ENCODE measurements at regions of chr6 and their contacts with region 1.

Region 1: GRCh38 chr6:3068329-3069214 is at the start of gene RIPK1:
- DNase-seq: peak; percentile 98
- ATAC-seq: peak; percentile 74
- H3K4me3 Mint-ChIP-seq: peak within 1 kb of the TSS; percentile 93
- H3K27ac Mint-ChIP-seq: peak within 1 kb of the TSS; percentile 94
- H3K4me1 Mint-ChIP-seq: peaks cover 38% of the 10 kb centered on the region
- H3K27me3 Mint-ChIP-seq: no peaks in the 10 kb centered on the region
- CTCF ChIP-seq: no peak
- total RNA-seq, gene RIPK1: 20.5 and 21.8 TPM in 2 replicates

Region 2: GRCh38 chr6:2765166-2765895 is 303.2 kb before region 1 on chr6 and contains the start of gene WRNIP1:
- CTCF ChIA-PET with region 1: no interaction called
- POLR2A ChIA-PET with region 1: interaction called, 3 read pairs
- intact Hi-C with region 1: loop called (anchors 1 kb)
- DNase-seq: peak; percentile 92
- ATAC-seq: peak; percentile 89
- H3K4me3 Mint-ChIP-seq: peak within 1 kb of the TSS; percentile 93
- H3K27ac Mint-ChIP-seq: peak within 1 kb of the TSS; percentile 99
- H3K4me1 Mint-ChIP-seq: peaks cover 39% of the 10 kb centered on the region
- H3K27me3 Mint-ChIP-seq: no peaks in the 10 kb centered on the region
- CTCF ChIP-seq: no peak
- total RNA-seq, gene WRNIP1: 31.6 and 31.9 TPM in 2 replicates

Region 3: GRCh38 chr6:2817778-2818443 is 250.7 kb before region 1 on chr6:
- CTCF ChIA-PET with region 1: no interaction called
- POLR2A ChIA-PET with region 1: no interaction called
- intact Hi-C with region 1: no loop called
- DNase-seq: no peak
- ATAC-seq: no peak
- H3K4me3 Mint-ChIP-seq: no peak overlapping the region
- H3K27ac Mint-ChIP-seq: no peak overlapping the region
- H3K4me1 Mint-ChIP-seq: no peaks in the 10 kb centered on the region
- H3K27me3 Mint-ChIP-seq: no peaks in the 10 kb centered on the region
- CTCF ChIP-seq: no peak

Region 4: DNA sequence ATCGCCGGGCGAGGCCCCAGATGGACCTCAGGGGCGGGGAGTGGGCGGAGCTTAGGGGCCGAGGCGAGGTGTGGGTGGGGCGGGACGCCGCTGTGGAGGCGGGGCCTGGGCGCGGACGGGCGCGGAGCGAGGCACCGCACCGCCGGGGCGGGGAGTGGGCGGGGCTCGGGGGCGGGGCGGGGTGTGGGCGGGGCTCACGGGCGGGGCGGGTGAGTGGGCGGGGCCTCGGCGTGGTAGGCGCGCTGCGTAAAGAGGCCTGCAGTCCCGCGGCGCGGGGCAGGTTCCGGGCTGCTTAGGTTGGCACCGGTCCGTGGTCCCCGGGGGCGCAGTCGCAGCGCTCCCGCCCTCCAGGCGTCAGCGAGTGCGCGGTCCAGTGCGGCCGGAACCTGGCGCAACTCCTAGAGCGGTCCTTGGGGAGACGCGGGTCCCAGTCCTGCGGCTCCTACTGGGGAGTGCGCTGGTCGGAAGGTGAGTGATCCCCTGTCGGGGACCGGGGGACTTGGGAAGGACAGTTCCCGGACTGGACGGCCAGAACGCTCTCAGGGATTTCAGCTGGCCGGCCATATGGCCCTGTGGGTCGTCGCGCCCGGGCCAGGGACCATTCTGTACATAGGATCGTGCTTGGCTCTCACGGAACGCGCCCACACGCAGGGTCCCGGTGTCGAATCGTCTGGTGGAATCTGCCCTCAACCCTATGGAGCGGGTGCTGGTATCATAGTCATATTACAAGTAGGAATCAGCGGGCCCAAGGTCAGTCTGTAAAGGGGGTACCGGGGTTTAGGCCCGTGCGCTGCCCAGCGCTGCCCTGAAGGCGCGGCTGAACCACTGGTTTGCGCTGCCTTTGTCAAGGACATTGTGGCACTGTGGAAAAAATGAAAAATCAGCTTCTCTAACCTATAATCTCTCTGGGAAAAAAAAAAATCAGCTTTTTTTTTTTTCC is 68.7 kb before region 1 on chr6 and contains the start of gene NQO2:
- CTCF ChIA-PET with region 1: interaction called, 6 read pairs
- POLR2A ChIA-PET with region 1: interaction called, 18 read pairs
- intact Hi-C with region 1: loop called (anchors 2 kb)
- DNase-seq: peak; percentile 91
- ATAC-seq: peak; percentile 88
- H3K4me3 Mint-ChIP-seq: peak within 1 kb of the TSS; percentile 90
- H3K27ac Mint-ChIP-seq: peak within 1 kb of the TSS; percentile 80
- H3K4me1 Mint-ChIP-seq: peaks cover 16% of the 10 kb centered on the region
- H3K27me3 Mint-ChIP-seq: no peaks in the 10 kb centered on the region
- CTCF ChIP-seq: no peak
- total RNA-seq, gene NQO2: 11.9 and 12.3 TPM in 2 replicates

Region 5: DNA sequence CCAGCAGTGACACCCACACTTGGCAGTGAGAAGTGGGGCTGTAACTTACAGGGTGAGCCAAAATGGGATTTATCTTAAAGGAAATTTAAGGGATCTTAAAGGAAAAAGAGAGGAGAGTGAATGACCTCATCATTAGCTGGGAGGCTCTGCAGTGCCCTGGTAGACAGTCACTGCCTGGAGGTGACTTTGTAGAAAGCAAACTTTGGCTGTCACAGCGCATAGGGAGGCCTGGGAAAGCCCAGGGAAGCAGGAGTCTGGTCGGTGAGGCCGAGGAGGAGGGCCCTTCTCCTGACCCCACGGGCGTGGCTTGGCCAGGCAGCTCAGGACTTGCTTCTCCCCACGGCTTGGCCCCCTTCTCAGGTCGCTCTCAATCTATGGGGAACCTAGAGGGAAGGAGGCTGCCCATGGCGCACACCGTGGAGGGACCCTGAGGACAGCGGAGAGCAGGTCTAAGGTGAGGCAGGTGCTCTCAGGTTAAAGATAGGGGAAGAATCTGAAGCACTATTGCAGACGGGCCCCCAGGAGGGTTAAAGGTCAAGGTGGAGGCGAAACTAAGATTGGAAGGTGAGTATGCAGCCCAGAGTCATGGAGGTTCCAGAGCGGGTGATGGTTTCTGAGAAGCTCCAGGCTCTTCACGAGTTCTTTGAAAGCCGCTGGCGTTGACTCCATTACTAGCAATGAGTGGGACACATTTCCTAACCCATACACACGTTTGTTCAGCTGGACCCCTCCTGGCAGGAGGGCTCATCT is 15.9 kb before region 1 on chr6:
- CTCF ChIA-PET with region 1: interaction called, 5 read pairs
- POLR2A ChIA-PET with region 1: interaction called, 12 read pairs
- intact Hi-C with region 1: no loop called
- DNase-seq: no peak
- ATAC-seq: no peak
- H3K4me3 Mint-ChIP-seq: peak overlapping the region; percentile 76
- H3K27ac Mint-ChIP-seq: no peak overlapping the region
- H3K4me1 Mint-ChIP-seq: peaks cover 14% of the 10 kb centered on the region
- H3K27me3 Mint-ChIP-seq: peaks cover 9% of the 10 kb centered on the region
- CTCF ChIP-seq: no peak

Region 6: GRCh38 chr6:3162565-3163247 is 94.1 kb after region 1 on chr6:
- CTCF ChIA-PET with region 1: no interaction called
- POLR2A ChIA-PET with region 1: interaction called, 3 read pairs
- intact Hi-C with region 1: loop called (anchors 2 kb)
- DNase-seq: peak; percentile 70
- ATAC-seq: peak; percentile 82
- H3K4me3 Mint-ChIP-seq: peak overlapping the region; percentile 87
- H3K27ac Mint-ChIP-seq: peak overlapping the region; percentile 69
- H3K4me1 Mint-ChIP-seq: peaks cover 28% of the 10 kb centered on the region
- H3K27me3 Mint-ChIP-seq: peaks cover 2% of the 10 kb centered on the region
- CTCF ChIP-seq: no peak

Region 7: DNA sequence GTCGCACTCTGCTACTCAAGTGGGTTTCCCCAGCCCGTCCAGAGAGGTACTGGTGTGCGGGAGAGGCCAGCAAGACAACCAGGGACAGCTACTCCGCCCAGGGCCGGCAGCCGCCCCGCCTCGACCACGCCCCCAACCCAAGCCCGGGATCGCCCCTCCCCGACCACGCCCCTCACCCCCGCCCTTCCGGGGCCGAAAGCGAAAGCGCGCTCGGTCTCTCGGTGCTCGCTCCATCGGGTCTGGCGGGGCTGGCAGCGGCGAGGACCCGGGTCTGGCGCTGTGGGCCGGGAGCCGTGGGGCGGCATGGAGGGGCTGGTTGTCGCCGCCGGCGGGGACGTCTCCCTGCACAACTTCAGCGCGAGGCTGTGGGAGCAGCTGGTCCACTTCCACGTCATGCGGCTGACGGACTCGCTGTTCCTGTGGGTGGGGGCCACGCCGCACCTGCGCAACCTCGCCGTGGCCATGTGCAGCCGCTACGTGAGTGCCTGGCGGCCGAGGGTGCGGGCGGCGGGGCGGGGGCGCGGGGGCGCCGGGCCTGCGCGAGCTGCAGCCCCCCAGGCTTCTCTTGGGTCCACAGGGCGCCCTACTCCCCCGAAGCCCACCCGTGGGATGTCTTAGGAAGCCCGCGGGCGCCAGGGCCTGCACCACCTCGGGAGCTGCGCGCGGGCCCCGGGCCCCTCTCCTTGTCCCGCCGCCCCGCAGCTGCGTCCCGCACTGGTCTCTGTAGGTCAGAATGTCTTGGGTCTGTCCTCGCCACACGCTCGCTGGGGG is 190.3 kb after region 1 on chr6 and contains the start of gene PSMG4:
- CTCF ChIA-PET with region 1: no interaction called
- POLR2A ChIA-PET with region 1: no interaction called
- intact Hi-C with region 1: loop called (anchors 2 kb)
- DNase-seq: peak; percentile 96
- ATAC-seq: peak; percentile 90
- H3K4me3 Mint-ChIP-seq: peak within 1 kb of the TSS; percentile 98
- H3K27ac Mint-ChIP-seq: peak within 1 kb of the TSS; percentile 88
- H3K4me1 Mint-ChIP-seq: peaks cover 40% of the 10 kb centered on the region
- H3K27me3 Mint-ChIP-seq: peaks cover 6% of the 10 kb centered on the region
- CTCF ChIP-seq: no peak
- total RNA-seq, gene PSMG4: 28.7 and 29.9 TPM in 2 replicates